ENCODE measurements at regions of chr11 and their contacts with region 1.

Region 1: DNA sequence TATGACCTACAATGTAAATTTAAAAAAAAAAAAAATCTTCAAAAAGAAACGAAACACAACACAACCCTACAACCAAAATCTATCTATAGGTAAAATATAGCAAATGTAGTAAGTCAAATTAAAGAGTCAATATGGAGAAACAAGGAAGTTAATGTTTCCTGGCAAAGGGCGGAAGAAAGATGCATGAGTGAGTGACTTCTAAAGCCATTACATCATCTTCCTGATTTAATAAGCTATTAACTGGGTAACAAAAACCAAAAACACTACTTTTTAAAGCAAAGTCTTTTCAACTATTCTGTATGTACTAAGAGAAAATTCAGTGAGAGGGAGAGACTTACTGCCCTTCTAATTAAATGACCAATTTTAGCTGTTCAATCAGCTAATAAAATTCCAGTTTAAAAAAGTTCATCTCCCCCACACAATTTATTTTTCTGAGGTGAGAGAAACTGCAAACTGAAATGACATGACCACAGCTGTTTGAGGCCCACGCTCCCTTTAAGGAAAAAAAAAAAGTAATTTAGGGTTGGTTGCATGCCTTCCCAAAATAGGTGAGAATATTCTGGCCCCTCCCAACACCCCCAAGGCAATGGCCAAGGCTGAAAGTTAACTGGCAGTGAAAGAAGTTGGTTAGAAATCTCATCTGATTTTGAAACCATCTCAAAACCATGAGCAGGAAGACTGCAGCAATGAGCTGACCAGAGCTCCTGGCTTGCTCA is 5.9 kb downstream of the SF1 start:
- DNase-seq: peak; percentile 47 to 83 (median 78)
- H3K4me3 ChIP-seq: peak overlapping the region; percentile 8 to 73 (median 35)
- H3K4me3 Mint-ChIP-seq: peak overlapping the region; percentile 58 to 75
- H3K27ac ChIP-seq: peak overlapping the region; percentile 53 to 73
- H3K27ac Mint-ChIP-seq: peak overlapping the region; percentile 85 to 94 (median 92)
- H3K4me1 ChIP-seq: peaks cover 38 to 55% of the 10 kb centered on the region in 2 donors
- H3K4me1 Mint-ChIP-seq: peaks cover 61% of the 10 kb centered on the region
- H3K27me3 ChIP-seq: no peaks in the 10 kb centered on the region
- H3K27me3 Mint-ChIP-seq: peaks cover 0 to 1% (median 0%) of the 10 kb centered on the region in 3 donors
- CTCF ChIP-seq: no peak

Region 2: GRCh38 chr11:64743591-64744543 is 28.6 kb before region 1 on chr11 and contains the start of gene RASGRP2:
- intact Hi-C with region 1: loop called (anchors 2 kb)
- DNase-seq: peak; percentile 78 to 81 (median 80)
- H3K4me3 ChIP-seq: peak within 1 kb of the TSS; percentile 71 to 95 (median 91)
- H3K4me3 Mint-ChIP-seq: peak within 1 kb of the TSS; percentile 91 to 98
- H3K27ac ChIP-seq: peak within 1 kb of the TSS; percentile 84 to 86
- H3K27ac Mint-ChIP-seq: peak within 1 kb of the TSS; percentile 92 to 97 (median 97)
- H3K4me1 ChIP-seq: peaks cover 32 to 48% of the 10 kb centered on the region in 2 donors
- H3K4me1 Mint-ChIP-seq: peaks cover 35% of the 10 kb centered on the region
- H3K27me3 ChIP-seq: no peaks in the 10 kb centered on the region
- H3K27me3 Mint-ChIP-seq: peaks cover 0 to 4% (median 1%) of the 10 kb centered on the region in 3 donors
- CTCF ChIP-seq: peak; percentile 68
- polyA plus RNA-seq, gene RASGRP2: 67.6 to 242 (median 68.8) TPM

Region 3: GRCh38 chr11:64810271-64810890 is 37.9 kb after region 1 on chr11 and contains the start of gene MEN1:
- intact Hi-C with region 1: no loop called
- DNase-seq: peak; percentile 67 to 81 (median 76)
- H3K4me3 ChIP-seq: peak within 1 kb of the TSS; percentile 61 to 98 (median 79)
- H3K4me3 Mint-ChIP-seq: peak within 1 kb of the TSS; percentile 94 to 95
- H3K27ac ChIP-seq: peak within 1 kb of the TSS; percentile 3 to 52
- H3K27ac Mint-ChIP-seq: peak within 1 kb of the TSS; percentile 11 to 89 (median 74)
- H3K4me1 ChIP-seq: peaks cover 12 to 19% of the 10 kb centered on the region in 2 donors
- H3K4me1 Mint-ChIP-seq: peaks cover 19% of the 10 kb centered on the region
- H3K27me3 ChIP-seq: no peaks in the 10 kb centered on the region
- H3K27me3 Mint-ChIP-seq: peaks cover 2 to 5% (median 4%) of the 10 kb centered on the region in 3 donors
- CTCF ChIP-seq: no peak
- polyA plus RNA-seq, gene MEN1: 9.4 to 26.2 (median 10.0) TPM

Region 4: DNA sequence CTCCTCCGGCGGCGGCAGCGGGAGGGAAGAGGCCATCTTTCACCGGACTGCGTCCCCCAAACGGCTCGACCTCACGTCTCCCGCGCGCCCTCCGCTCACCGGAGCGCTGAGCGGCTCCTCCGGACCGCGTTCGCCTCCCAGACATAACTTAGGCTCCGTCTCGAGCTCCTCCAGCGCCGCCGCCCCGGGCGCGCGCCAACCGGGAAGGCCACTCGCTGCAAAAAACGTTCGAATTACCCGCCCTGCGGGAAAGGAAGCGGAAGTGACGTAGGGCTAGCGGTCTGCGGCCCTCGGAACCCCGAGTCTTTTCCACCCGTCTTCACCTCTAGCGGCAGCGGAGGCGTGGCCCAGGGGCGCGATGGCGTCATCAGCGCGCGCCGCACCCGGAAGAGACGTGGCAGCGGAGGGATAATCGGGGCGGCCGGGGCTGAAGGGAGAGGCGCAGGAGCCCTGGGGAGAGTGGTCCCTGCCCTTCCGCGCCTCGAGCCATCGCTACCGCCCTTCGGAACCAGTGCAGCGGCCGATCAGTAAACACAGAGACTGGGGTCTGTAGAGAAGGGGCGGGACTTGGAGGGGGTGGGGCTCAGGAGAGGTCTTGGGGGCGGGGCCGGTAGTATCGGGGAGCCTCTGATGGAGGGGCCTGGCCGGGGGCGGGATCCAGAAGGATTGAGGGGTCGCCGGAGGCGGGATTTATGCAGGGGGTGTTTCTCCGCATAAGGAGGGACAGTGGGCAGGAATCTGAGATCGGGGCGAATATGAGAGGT is 311.6 kb after region 1 on chr11 and contains the starts of genes CDCA5 and ZFPL1:
- intact Hi-C with region 1: no loop called
- DNase-seq: peak; percentile 95 to 97 (median 96)
- H3K4me3 ChIP-seq: peak within 1 kb of the TSS; percentile 62 to 95 (median 84)
- H3K4me3 Mint-ChIP-seq: peak within 1 kb of the TSS; percentile 88 to 95
- H3K27ac ChIP-seq: peak within 1 kb of the TSS; percentile 73 to 92
- H3K27ac Mint-ChIP-seq: peak within 1 kb of the TSS; percentile 93 to 98 (median 95)
- H3K4me1 ChIP-seq: peaks cover 33 to 43% of the 10 kb centered on the region in 2 donors
- H3K4me1 Mint-ChIP-seq: peaks cover 44% of the 10 kb centered on the region
- H3K27me3 ChIP-seq: no peaks in the 10 kb centered on the region
- H3K27me3 Mint-ChIP-seq: no peaks in the 10 kb centered on the region
- CTCF ChIP-seq: no peak
- polyA plus RNA-seq, gene CDCA5: 0.20 to 0.28 TPM in 2 of 3 donors, not detected in the other
- polyA plus RNA-seq, gene ZFPL1: 25.1 to 41.1 (median 27.2) TPM

Measured in CD14-positive monocyte (primary cell).